Activated T-helper 1 cell treated with anti-CD3 and anti-CD28 coated beads, Interleukin-12 subunit alpha, Interleukin-12 subunit beta, Interleukin-2, Interleukin-4 antibody, amounts not matched to agents 30 ng/mL and 10 ng/mL and 1 ng/mL, durations not matched to agents 14 hours and 24 hours and 36 hours (primary cell): ENCODE measurements at regions of chr18 and their contacts with region 1.

Region 1: DNA sequence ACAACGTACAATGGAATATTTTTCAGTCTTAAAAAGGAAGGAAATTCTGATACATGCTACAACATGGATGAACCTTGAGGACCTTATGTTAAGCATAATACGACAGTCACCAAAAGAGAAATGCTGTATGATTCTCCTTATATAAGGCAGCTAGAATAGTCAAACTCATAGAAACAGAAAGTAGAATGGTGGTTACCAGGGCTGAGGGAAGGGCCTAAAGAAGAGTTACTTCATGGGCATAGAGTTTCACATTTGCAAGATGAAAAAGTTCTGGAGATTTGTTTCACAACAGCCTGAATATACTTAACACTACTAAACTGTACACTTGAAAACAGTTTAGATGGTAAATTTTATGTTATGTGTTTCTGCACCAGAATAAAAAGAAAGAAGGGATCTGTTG is 113.3 kb downstream of the GALNT1 start:
- DNase-seq: no peak
- H3K4me3 Mint-ChIP-seq: no peak overlapping the region
- H3K27ac Mint-ChIP-seq: no peak overlapping the region
- H3K4me1 Mint-ChIP-seq: no peaks in the 10 kb centered on the region
- H3K27me3 Mint-ChIP-seq: no peaks in the 10 kb centered on the region

Region 2: GRCh38 chr18:35580701-35581539 is 113.9 kb before region 1 on chr18:
- intact Hi-C with region 1: loop called (anchors 5 kb)
- DNase-seq: peak; percentile 44
- H3K4me3 Mint-ChIP-seq: peak overlapping the region; percentile 76
- H3K27ac Mint-ChIP-seq: no peak overlapping the region
- H3K4me1 Mint-ChIP-seq: peaks cover 33% of the 10 kb centered on the region
- H3K27me3 Mint-ChIP-seq: peaks cover 3% of the 10 kb centered on the region

Region 3: DNA sequence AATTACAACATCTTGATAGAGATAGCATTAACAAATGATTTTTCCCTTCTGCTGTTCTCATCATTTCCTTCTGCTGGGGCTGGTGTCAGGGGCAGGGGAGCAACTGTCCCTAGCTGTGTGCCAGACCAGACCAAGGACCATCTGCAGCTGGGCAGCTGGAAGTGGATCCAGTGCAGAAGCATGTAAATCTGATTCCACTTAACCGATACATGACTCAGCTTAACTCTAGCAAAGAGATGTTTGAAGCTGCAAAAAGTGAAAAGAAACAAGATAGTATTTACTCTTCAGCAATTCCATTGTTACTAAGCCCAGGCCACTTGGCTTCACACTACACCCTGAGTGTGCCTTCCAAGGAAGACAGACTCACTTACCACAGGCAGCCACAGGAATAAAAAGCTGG is 37.8 kb after region 1 on chr18:
- intact Hi-C with region 1: no loop called
- DNase-seq: no peak
- H3K4me3 Mint-ChIP-seq: no peak overlapping the region
- H3K27ac Mint-ChIP-seq: no peak overlapping the region
- H3K4me1 Mint-ChIP-seq: no peaks in the 10 kb centered on the region
- H3K27me3 Mint-ChIP-seq: peaks cover 3% of the 10 kb centered on the region